WTC11 (cell line): ENCODE measurements at regions of chr17 and their contacts with region 1.

Region 1: GRCh38 chr17:21239680-21240368 is 13.4 kb downstream of the NATD1 start:
- DNase-seq: peak; percentile 31
- ATAC-seq: peak; percentile 77
- H3K4me3 Mint-ChIP-seq: no peak overlapping the region
- H3K27ac Mint-ChIP-seq: peak overlapping the region; percentile 70; the same call in 1 of the 2 replicates
- H3K4me1 Mint-ChIP-seq: peaks cover 26% of the 10 kb centered on the region
- H3K27me3 Mint-ChIP-seq: peaks cover 4% of the 10 kb centered on the region; the same call in 1 of the 2 replicates
- CTCF ChIP-seq: peak; percentile 36

Region 2: DNA sequence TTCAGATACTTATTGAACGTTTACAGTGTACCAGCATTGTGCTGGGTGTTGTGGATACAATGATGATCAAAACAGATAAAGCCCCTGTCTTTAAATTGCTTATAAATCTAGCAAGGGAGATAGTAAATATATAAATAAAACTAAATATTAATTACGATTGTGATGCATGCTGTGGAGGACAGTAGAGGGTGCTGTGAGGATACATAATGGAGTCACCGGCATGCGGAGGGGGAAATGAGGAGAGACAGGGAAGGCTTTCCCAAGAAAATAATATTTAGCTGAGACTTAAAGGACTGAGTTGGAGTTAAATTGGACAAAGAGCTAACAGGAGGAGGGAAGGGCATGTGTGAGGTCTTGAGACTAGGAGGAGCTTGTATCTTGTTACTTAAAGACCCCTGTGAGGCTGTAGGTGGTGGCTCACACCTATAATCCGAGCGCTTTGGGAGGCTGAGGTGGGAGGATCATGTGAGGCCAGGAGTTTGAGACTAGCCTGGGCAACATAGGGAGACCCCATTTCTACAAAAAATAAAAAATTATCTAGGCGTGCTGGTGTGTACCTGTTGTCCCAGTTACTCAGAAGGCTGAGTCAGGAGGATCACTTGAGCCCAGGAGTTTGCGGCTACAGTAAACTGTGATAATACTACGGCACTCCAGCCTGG is 110.7 kb before region 1 on chr17:
- CTCF ChIA-PET with region 1: interaction called, 19 read pairs
- POLR2A ChIA-PET with region 1: no interaction called
- DNase-seq: no peak
- ATAC-seq: no peak
- H3K4me3 Mint-ChIP-seq: peak overlapping the region; percentile 45
- H3K27ac Mint-ChIP-seq: peak overlapping the region; percentile 75
- H3K4me1 Mint-ChIP-seq: peaks cover 35% of the 10 kb centered on the region
- H3K27me3 Mint-ChIP-seq: peaks cover 4% of the 10 kb centered on the region; the same call in 1 of the 2 replicates
- CTCF ChIP-seq: no peak

Region 3: GRCh38 chr17:21214015-21214776 is 25.6 kb before region 1 on chr17 and contains the start of gene TMEM11:
- CTCF ChIA-PET with region 1: interaction called, 13 read pairs
- POLR2A ChIA-PET with region 1: no interaction called
- DNase-seq: peak; percentile 97
- ATAC-seq: peak; percentile 89
- H3K4me3 Mint-ChIP-seq: peak within 1 kb of the TSS; percentile 96
- H3K27ac Mint-ChIP-seq: peak within 1 kb of the TSS; percentile 98
- H3K4me1 Mint-ChIP-seq: peaks cover 39% of the 10 kb centered on the region
- H3K27me3 Mint-ChIP-seq: no peaks in the 10 kb centered on the region; the same call in 1 of the 2 replicates
- CTCF ChIP-seq: no peak
- total RNA-seq, gene TMEM11: 32.9 to 37.0 TPM (median 33.9 TPM) in 3 replicates

Region 4: GRCh38 chr17:21249920-21250703 is 10.3 kb after region 1 on chr17:
- CTCF ChIA-PET with region 1: interaction called, 17 read pairs
- POLR2A ChIA-PET with region 1: interaction called, 3 read pairs
- DNase-seq: no peak
- ATAC-seq: peak; percentile 35
- H3K4me3 Mint-ChIP-seq: no peak overlapping the region
- H3K27ac Mint-ChIP-seq: no peak overlapping the region
- H3K4me1 Mint-ChIP-seq: peaks cover 16% of the 10 kb centered on the region
- H3K27me3 Mint-ChIP-seq: peaks cover 8% of the 10 kb centered on the region; the same call in 1 of the 2 replicates
- CTCF ChIP-seq: no peak